ENCODE measurements at regions of chr4 and their contacts with region 1.

Region 1: GRCh38 chr4:112604589-112604988 is 32.1 kb downstream of the ZGRF1 start:
- DNase-seq: no peak
- ATAC-seq: peak; percentile 75 to 78

Region 2: DNA sequence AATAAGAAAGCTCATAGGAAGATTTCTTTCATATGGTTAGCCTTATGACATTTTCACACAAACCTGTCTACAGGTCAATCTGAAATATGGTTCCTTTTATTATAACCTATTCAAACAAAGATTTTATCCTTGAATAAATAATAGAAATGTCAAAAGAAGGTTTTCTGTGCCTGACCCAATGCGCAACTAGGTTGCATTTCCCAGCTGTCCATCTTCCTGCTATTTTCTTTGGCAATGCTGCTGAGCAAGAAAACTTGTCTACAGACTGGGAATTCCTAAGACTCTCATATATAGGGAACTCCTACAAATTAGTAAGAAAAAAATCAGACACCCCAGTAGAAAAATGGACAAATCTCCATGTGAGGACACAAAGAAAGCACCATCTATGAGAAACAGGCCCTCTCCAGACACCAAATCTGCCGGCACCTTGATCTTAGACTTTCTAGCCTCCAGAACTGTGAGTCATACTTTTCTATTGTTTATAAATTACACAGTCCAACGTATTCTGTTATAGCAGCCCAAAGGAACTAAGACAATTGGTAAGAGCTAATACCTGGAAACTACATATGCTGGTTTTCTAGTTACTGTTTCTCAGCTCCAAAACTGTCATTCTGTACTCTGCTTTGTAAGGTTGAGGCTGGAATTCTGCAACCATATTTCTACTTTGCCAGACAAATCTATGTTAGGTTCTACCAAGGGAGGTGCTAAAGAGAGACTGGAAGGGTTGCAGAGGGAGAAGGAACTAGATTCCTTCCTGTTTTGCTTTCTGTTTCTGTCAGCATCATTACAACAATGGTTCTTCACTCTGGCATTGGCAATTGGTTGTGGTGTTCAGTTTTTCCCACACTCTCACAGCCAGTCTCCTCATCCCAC is 495.2 kb before region 1 on chr4:
- intact Hi-C with region 1: loop called in 1 of 2 experiments (anchors 10 kb)
- DNase-seq: no peak
- ATAC-seq: peak in 1 of 2 donors; percentile 34

Region 3: DNA sequence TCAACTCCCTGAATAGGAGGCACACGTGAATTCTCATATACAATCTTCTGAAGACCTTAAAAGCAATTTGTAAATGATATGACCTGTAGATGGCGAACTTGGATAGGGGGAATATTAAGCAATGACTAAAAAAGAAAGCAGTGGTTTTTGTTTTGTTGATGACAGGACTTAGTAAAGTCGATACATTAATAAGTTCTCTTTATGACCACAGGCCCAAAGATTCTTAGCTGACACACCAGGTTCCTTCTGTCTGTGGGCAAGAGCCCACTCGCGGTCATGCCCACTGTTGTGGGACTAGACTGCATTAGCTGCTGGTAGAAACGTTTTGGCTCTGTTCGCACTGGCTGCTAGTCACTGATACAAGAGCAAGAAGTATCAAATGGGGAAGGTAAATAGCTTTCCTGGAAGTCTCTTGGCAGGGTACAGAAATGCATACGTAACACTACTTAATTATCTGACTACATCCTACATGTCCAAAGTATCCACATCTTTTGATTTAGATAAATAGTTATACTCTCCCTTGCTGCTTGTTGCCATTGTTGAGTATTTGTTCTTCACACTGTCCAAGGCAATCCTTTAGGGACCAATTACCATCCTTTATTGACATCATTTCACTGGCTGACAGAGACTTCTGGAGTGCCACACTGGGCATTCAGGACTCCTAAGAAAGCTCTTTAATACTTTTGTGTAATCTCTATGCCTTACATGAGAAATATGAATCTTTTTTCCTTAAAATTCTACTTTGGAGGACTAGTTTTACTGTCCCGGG is 276.4 kb before region 1 on chr4:
- intact Hi-C with region 1: loop called (anchors 2 to 10 kb)
- DNase-seq: no peak
- ATAC-seq: peak in 1 of 2 donors; percentile 71

Region 4: DNA sequence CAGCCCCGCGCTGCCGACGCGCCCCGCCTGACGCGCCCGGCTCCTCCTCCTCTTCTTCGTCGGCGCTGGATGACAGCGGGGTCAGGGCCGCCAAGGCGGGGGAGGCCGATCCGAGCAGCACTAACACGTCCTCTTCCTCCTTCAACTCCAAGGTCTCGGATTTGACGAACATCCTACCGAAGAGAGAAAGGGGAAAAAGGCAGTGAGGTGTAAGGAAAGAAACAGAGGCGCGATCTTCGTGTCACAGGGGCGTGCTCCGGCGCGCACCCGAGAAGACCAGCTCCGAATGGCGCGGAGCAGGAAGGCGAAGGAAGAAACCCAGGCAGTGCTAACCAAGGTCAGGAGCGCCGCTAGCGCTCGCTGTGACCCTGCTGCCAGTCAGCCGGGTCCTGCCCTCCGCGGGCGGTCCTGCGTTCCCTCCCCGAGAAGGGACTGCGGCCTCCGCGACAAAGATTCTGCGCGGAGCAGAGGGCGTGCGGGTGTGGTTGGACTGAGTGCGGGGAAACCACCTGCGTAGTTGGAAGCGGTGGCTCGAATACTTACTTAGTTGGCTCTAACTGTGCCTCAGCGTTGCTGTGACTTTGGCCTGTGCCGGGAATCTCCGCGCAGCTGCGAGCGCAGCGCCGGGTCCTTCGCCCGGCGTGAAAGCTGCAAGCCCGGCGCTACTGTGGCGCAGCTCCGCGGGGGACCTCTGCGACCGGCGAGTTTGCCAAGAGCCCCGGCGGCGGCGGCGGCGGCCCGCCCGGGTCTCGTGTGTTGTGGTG is 89.1 kb before region 1 on chr4:
- intact Hi-C with region 1: no loop called
- DNase-seq: peak; percentile 28
- ATAC-seq: peak; percentile 56 to 69

Region 5: GRCh38 chr4:112693507-112693906 is 88.9 kb after region 1 on chr4:
- intact Hi-C with region 1: no loop called
- DNase-seq: no peak
- ATAC-seq: no peak